OCI-LY7 (cell line): ENCODE measurements at regions of chr1 and their contacts with region 1.

Region 1: DNA sequence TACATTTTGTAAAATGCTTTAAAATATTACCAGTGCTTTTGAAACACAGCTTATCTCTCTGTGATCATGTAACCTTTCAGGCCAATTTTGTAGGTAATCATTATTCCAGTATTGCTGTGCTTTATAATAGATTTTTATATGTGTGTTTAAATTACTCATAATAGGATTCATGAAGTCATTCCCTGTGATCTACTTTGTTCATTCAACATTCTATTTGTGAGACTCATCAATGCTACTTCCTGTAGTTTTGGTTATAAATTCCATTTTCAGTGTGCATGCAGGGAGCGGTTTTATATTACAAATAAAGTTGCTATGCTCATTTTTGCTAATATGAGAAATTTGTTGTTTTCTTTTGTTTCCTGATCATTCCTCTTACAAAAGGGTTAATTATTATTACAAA is 4.1 kb upstream of the OR2M5 start:
- DNase-seq: no peak
- H3K4me3 ChIP-seq: no peak overlapping the region
- H3K27ac ChIP-seq: no peak overlapping the region
- H3K4me1 ChIP-seq: no peaks in the 10 kb centered on the region
- CTCF ChIP-seq: no peak

Region 2: GRCh38 chr1:247936415-247936814 is 204.4 kb before region 1 on chr1:
- CTCF ChIA-PET with region 1: no interaction called
- POLR2A ChIA-PET with region 1: no interaction called
- intact Hi-C with region 1: loop called (anchors 10 kb)
- DNase-seq: no peak
- H3K4me3 ChIP-seq: no peak overlapping the region
- H3K27ac ChIP-seq: no peak overlapping the region
- H3K4me1 ChIP-seq: no peaks in the 10 kb centered on the region
- CTCF ChIP-seq: no peak